Naive thymus-derived CD4-positive, alpha-beta T cell (primary cell): ENCODE measurements at regions of chr21 and their contacts with region 1.

Region 1: GRCh38 chr21:44920694-44921604 is at the start of gene ITGB2:
- DNase-seq: peak in 5 of 9 donors; percentile 56 to 66 (median 58)
- ATAC-seq: peak; percentile 73
- H3K4me3 ChIP-seq: peak within 1 kb of the TSS; percentile 88
- H3K4me3 Mint-ChIP-seq: peak within 1 kb of the TSS; percentile 89 to 100 (median 99)
- H3K27ac ChIP-seq: peak within 1 kb of the TSS; percentile 72
- H3K27ac Mint-ChIP-seq: peak within 1 kb of the TSS; percentile 76 to 98 (median 95)
- H3K4me1 ChIP-seq: peaks cover 43 to 61% of the 10 kb centered on the region in 2 donors
- H3K4me1 Mint-ChIP-seq: peaks cover 63 to 85% (median 75%) of the 10 kb centered on the region in 7 donors
- H3K27me3 ChIP-seq: no peaks in the 10 kb centered on the region
- H3K27me3 Mint-ChIP-seq: no peaks in the 10 kb centered on the region
- total RNA-seq, gene ITGB2: 280 to 877 (median 371) TPM

Region 2: DNA sequence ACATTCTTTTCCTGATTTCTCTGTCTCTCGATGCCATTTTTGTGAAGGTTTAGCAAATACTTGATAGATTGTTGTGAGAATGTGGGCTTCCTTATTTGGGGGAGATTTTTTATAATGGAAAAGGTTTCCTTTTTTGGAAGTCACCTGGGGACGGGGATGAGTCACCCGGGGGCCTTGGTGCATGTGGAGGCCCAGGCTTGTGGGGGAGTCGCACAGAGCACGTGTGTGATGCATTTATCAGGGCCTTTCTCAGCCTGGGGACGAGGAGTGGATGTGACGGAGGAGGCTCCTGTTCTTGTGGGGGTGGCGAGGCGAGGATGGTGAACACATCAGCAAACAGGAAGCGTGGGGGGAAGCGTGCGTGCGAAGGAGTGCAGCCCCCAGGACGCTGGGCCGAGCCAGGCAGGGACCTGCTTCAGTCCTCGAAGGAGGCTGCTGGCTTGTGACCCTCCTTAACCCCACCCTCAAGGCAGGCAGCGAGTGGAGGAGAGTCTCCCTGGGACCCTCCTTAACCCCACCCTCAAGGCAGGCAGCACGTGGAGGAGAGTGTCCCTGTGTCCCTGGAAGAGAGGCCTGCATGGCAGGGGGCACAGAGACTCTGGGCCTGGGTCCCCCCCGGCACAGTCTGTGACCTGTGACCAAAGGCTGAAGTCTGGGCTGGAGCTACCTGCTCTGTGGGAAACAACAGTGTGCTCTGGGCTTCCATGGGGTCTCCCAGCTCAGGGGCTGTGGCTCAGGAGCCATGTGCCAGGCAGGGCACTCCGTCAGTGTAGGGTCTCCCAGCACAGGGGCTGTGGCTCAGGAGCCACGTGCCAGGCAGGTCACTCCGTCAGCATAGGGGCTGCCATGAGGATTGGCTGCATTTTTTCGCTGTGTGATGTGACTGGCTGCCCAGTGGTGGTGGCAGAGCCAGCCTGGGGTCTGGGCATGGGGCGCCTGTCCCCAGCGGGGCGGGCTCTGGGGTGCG is 998.7 kb before region 1 on chr21:
- CTCF ChIA-PET with region 1: no interaction called
- POLR2A ChIA-PET with region 1: no interaction called
- intact Hi-C with region 1: loop called in 1 of 2 experiments (anchors 2 kb)
- DNase-seq: peak in 8 of 9 donors; percentile 40 to 79 (median 70)
- ATAC-seq: peak; percentile 67
- H3K4me3 ChIP-seq: peak overlapping the region; percentile 35
- H3K4me3 Mint-ChIP-seq: peak overlapping the region; percentile 55 to 87 (median 82)
- H3K27ac ChIP-seq: peak overlapping the region; percentile 70
- H3K27ac Mint-ChIP-seq: peak overlapping the region; percentile 84 to 97 (median 94)
- H3K4me1 ChIP-seq: peaks cover 25 to 35% of the 10 kb centered on the region in 2 donors
- H3K4me1 Mint-ChIP-seq: peaks cover 42 to 62% (median 53%) of the 10 kb centered on the region in 7 donors
- H3K27me3 ChIP-seq: no peaks in the 10 kb centered on the region
- H3K27me3 Mint-ChIP-seq: peaks cover 0 to 3% (median 0%) of the 10 kb centered on the region in 5 donors

Region 3: GRCh38 chr21:44792702-44793591 is 128.0 kb before region 1 on chr21:
- CTCF ChIA-PET with region 1: no interaction called
- POLR2A ChIA-PET with region 1: no interaction called
- intact Hi-C with region 1: no loop called
- DNase-seq: peak in 8 of 9 donors; percentile 37 to 73 (median 62)
- ATAC-seq: peak; percentile 96
- H3K4me3 ChIP-seq: no peak overlapping the region
- H3K4me3 Mint-ChIP-seq: no peak overlapping the region
- H3K27ac ChIP-seq: no peak overlapping the region
- H3K27ac Mint-ChIP-seq: peak overlapping the region; percentile 2 to 83 (median 40)
- H3K4me1 ChIP-seq: peaks cover 7 to 10% of the 10 kb centered on the region in 2 donors
- H3K4me1 Mint-ChIP-seq: peaks cover 17 to 64% (median 53%) of the 10 kb centered on the region in 7 donors
- H3K27me3 ChIP-seq: no peaks in the 10 kb centered on the region
- H3K27me3 Mint-ChIP-seq: no peaks in the 10 kb centered on the region

Region 4: DNA sequence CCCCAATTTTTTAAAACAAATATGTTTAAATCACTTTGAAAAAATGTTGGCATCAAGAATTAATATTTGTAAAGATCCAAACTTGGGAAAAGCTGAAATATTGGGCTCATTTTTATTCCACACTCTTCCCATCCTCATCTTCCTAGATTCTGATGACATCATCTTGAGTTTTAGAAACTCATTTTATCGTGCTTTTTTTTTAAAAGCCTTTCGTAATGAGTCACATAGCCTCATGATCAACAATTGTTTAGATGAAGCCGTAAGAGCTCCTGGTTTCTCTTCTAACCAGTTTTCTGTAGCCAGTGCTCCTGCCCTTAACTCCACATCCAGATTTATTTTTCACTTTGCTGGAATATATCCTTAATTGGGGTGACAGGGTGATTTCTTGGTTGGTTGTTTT is 288.1 kb after region 1 on chr21:
- CTCF ChIA-PET with region 1: no interaction called
- POLR2A ChIA-PET with region 1: no interaction called
- intact Hi-C with region 1: no loop called
- DNase-seq: no peak
- ATAC-seq: no peak
- H3K4me3 ChIP-seq: no peak overlapping the region
- H3K4me3 Mint-ChIP-seq: no peak overlapping the region
- H3K27ac ChIP-seq: no peak overlapping the region
- H3K27ac Mint-ChIP-seq: peak overlapping the region in 2 of 9 donors; percentile 16 to 25
- H3K4me1 ChIP-seq: peaks cover 0 to 6% of the 10 kb centered on the region in 2 donors
- H3K4me1 Mint-ChIP-seq: peaks cover 0 to 24% (median 0%) of the 10 kb centered on the region in 7 donors
- H3K27me3 ChIP-seq: no peaks in the 10 kb centered on the region
- H3K27me3 Mint-ChIP-seq: no peaks in the 10 kb centered on the region